Activated T-helper 2 cell treated with anti-CD3 and anti-CD28 coated beads, Interferon-gamma antibody, Interleukin-2, Interleukin-4, amounts not matched to agents 10 μg/mL and 5 μg/mL and 100 μg/mL, durations not matched to agents 14 hours and 24 hours and 36 hours (primary cell): ENCODE measurements at regions of chrX and their contacts with region 1.

Region 1: DNA sequence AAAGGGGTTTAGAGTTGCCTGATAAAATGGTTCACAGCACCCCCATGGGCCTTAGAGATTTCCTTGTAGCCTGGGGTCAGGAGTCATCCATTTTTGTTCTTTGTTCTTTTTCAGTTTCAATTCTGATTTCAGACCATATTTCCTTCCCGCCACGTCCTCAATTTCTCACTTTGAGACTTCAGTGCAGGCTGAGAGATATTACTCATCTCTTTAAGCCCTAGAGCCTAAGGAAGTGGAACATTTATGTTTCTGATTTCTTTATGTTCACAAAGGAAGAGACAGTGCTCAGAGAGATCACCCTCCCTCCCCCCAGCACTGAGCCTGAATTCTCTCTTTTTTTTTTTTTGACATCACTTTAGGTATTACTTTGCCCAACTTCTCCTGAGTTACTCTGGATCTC is 56.3 kb downstream of the MSN start:
- DNase-seq: peak; percentile 16
- H3K4me3 Mint-ChIP-seq: peak overlapping the region; percentile 4
- H3K27ac Mint-ChIP-seq: peak overlapping the region; percentile 82
- H3K4me1 Mint-ChIP-seq: peaks cover 66% of the 10 kb centered on the region
- H3K27me3 Mint-ChIP-seq: no peaks in the 10 kb centered on the region

Region 2: DNA sequence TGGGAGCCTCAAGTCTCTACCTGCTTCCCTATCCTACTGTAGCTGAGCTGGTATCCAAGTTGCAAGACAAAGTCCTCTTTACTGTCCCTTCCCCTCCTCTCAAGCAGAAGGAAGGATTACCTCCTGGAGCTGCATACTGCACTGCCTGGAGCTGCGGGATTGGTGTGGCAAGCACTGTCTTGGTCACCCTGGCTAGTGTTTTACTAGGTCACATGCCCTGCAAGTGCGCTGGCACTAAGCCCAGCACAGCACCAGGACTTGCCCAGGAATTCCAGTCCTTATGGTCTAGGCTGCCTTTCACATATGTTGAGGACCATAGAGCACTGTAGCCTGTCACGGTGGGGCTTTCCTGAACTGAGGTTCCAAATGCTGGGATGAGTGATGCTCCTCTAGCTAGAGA is 520.2 kb before region 1 on chrX:
- intact Hi-C with region 1: no loop called
- DNase-seq: no peak
- H3K4me3 Mint-ChIP-seq: no peak overlapping the region
- H3K27ac Mint-ChIP-seq: no peak overlapping the region
- H3K4me1 Mint-ChIP-seq: no peaks in the 10 kb centered on the region
- H3K27me3 Mint-ChIP-seq: no peaks in the 10 kb centered on the region

Region 3: GRCh38 chrX:65658229-65658628 is 65.5 kb before region 1 on chrX:
- intact Hi-C with region 1: no loop called
- DNase-seq: no peak
- H3K4me3 Mint-ChIP-seq: no peak overlapping the region
- H3K27ac Mint-ChIP-seq: peak overlapping the region; percentile 22
- H3K4me1 Mint-ChIP-seq: peaks cover 29% of the 10 kb centered on the region
- H3K27me3 Mint-ChIP-seq: no peaks in the 10 kb centered on the region

Region 4: DNA sequence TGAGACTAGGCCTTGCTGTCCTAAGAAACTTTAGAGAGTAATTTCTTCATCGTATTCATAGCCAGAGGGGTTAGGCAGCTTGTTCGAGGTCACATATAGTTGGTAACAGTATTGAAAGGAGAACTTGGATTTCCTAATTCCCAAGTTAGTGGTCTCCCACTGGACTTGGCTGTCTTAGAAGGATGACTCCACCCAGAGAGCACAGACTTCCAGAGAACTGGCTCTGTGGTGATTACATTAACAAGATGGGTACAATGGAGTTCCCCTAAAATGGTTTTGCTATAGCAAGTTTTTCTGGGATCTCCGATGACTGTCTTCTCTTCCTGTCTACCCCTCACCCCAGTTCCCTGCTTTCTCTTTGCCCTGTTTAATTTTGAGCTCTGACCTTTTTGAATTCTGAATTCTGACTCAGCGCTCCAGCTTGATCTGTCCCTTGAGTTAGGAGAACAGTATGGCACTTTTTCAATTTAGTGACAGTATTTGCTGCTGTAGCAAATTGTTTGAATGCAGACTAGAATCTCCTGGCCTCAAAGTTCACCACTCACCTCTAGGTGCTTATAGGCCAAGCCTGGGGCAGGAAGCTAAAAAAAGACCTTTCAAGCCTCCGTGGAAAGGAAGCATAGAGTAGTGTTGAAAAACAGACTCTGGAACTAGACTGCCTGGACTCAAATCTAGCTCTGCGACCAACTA is 49.4 kb before region 1 on chrX:
- intact Hi-C with region 1: loop called (anchors 1 kb)
- DNase-seq: no peak
- H3K4me3 Mint-ChIP-seq: peak overlapping the region; percentile 82
- H3K27ac Mint-ChIP-seq: peak overlapping the region; percentile 97
- H3K4me1 Mint-ChIP-seq: peaks cover 71% of the 10 kb centered on the region
- H3K27me3 Mint-ChIP-seq: no peaks in the 10 kb centered on the region

Region 5: DNA sequence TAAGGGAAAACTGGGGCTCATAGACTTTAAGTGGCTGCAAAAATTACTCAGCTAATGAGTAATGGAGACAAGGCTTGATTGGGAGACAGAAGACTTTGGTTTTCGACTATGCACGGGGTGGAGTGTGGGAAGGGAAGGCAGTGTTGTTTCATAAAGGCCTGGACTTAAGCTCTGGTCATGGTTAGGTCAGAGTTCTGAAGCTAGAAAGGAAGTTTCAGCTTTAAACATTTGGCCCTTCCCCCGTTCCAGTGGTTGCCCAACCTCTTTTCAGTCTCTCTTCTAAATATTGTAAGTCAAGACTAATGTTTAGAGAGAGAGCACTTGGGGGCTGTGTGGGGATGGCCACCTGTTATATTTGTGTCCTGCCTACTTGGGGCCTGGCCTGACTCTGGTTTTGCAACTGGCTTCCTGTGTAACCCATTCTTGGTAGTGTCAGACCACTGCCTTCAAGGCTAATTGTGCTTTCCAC is 35.3 kb before region 1 on chrX:
- intact Hi-C with region 1: loop called (anchors 5 kb)
- DNase-seq: no peak
- H3K4me3 Mint-ChIP-seq: peak overlapping the region; percentile 26
- H3K27ac Mint-ChIP-seq: peak overlapping the region; percentile 68
- H3K4me1 Mint-ChIP-seq: peaks cover 65% of the 10 kb centered on the region
- H3K27me3 Mint-ChIP-seq: no peaks in the 10 kb centered on the region

Region 6: GRCh38 chrX:65697915-65698796 is 25.6 kb before region 1 on chrX:
- intact Hi-C with region 1: loop called (anchors 1 kb)
- DNase-seq: peak; percentile 64
- H3K4me3 Mint-ChIP-seq: peak overlapping the region; percentile 45
- H3K27ac Mint-ChIP-seq: peak overlapping the region; percentile 94
- H3K4me1 Mint-ChIP-seq: peaks cover 71% of the 10 kb centered on the region
- H3K27me3 Mint-ChIP-seq: no peaks in the 10 kb centered on the region

Region 7: DNA sequence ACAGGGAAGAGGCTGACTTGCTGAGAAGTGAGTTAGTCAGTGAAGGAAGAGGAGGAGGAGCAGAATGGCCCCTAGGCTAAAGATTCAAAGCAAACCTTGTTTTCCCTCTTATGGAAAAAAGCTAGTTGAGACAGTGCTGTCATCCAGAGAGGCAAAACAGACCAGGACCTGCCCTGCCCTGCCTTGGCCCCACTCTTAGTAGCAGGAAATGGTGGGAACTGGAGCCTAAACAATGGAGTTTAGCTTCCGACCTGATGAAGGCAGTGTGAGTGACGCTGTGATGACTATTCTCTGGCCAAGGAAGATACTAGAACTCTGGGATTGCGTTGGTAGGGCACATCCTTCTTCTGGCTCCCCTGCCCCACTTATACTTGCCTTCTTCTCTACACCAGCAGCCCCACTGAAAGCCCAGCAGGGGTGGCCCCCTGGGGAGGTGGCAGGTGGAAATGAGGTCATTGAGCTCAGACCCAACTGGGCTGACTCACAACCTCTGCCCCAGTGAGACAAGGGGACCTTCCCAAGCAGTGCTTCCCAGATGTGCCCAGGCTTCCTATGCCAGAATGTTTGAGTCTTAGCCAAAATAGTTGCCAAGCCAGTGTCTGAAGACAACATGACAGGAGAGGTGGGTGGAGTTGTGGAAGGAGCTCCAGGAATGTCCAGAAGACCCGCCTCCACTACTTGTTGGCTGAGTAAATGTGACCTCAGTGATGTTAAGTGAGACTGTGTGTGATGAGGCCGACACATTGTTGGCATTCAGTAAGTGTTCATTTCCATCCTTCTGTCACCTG is 17.5 kb before region 1 on chrX:
- intact Hi-C with region 1: loop called (anchors 1 kb)
- DNase-seq: no peak
- H3K4me3 Mint-ChIP-seq: no peak overlapping the region
- H3K27ac Mint-ChIP-seq: peak overlapping the region; percentile 92
- H3K4me1 Mint-ChIP-seq: peaks cover 55% of the 10 kb centered on the region
- H3K27me3 Mint-ChIP-seq: no peaks in the 10 kb centered on the region

Region 8: DNA sequence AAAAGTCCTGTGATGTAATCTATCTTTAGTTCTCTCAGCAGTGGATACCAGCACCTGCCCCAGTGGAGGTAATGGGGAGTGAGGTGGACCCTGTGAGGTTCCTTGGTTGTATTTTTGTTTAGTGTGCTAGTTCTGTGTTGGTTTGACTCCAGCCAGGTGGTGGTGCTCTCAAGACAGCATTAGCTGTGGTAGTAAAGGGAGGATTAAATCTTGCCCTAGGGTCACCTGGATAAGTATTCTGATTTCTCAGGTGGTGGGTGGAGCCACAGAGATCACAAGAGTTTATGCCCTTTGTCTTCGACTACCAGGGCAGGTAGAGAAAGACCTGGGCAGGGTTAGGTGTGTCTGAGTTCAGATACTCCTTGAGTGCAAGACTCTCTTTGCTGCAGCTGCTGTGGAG is 1091.5 kb after region 1 on chrX:
- intact Hi-C with region 1: no loop called
- DNase-seq: no peak
- H3K4me3 Mint-ChIP-seq: no peak overlapping the region
- H3K27ac Mint-ChIP-seq: no peak overlapping the region
- H3K4me1 Mint-ChIP-seq: no peaks in the 10 kb centered on the region
- H3K27me3 Mint-ChIP-seq: no peaks in the 10 kb centered on the region